PC-9 (cell line): ENCODE measurements at regions of chr1 and their contacts with region 1.

Region 1: DNA sequence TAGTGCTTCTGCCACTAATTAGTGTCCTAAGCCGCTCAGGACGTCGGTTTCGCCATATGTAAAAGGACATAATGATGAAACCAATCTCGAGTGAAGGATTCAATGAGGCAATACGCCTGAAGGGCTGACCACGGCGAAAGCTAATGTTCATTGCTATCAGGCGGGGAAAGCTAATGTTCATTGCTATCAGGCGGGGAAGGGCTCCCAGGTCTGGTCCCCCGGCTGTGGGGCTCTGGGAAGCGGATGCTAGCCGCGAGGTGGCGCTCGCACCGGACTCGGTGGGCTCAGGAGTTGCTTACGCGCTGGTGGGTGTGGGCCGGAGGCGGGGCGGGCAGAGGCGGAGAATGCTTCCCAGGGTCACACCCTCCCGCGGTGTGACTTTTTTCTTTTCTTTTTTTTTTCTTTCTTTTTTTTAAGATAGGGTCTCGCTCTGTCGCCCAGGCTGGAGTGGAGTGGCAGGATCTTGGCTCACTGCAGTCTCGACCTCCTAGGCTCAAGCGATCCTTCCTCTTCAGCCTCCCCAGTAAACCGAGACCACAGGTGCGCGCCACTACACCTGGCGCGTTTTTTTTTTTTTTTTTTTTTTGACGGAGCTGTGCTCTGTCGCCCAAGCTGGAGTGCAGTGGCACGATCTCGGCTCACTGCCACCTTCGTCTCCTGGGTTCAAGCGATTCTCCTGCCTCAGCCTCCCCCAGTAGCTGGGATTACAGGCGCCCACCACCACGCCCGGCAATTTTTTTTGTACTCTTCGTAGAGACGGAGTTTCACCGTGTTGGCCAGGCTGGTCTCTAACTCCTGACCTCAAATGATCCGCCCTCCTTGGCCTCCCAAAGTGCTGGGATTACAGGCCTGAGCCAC is 1.1 kb upstream of the PEAR1 start:
- DNase-seq: peak; percentile 75 to 91
- H3K4me3 ChIP-seq: peak overlapping the region; percentile 24; the same call in 1 of the 2 replicates
- H3K27ac ChIP-seq: no peak overlapping the region
- H3K4me1 ChIP-seq: peaks cover 23% of the 10 kb centered on the region
- H3K27me3 ChIP-seq: peaks cover 8% of the 10 kb centered on the region
- CTCF ChIP-seq: peak; percentile 87

Region 2: DNA sequence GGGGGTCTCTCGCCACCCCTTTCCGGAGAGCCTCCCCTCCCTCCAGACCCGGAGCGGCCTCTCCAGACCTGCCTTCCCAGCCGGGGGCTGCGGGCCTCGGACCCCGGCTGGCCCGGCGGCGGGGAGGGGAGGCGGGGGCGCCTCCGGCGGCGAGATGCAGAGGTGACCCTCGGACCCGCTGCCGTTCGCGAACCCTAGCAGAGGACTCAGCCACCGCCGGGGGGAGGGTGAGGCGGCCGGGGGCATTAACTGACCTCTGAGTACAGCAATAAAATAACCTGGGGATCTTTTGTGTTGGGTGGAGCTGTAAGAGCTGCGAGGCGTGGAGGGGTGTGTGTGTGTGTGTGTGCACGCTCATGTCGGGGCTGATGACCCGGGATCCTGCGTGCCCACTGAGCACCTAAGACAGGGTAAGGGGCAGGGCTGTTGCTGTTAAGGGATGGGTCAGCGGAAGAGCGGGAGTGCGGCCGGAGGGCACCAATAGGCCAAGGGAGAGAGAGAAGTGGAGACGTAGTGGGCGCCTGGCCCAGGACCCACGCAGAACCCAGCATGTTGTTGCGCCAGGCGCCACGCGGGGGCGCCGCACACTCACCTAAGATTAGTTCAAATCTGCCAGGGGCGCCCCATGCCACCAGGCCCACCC is 266.9 kb before region 1 on chr1:
- CTCF ChIA-PET with region 1: interaction called, 4 read pairs
- POLR2A ChIA-PET with region 1: no interaction called
- intact Hi-C with region 1: loop called (anchors 2 kb)
- DNase-seq: peak in 1 of 2 experiments; percentile 32
- H3K4me3 ChIP-seq: no peak overlapping the region
- H3K27ac ChIP-seq: no peak overlapping the region
- H3K4me1 ChIP-seq: peaks cover 26% of the 10 kb centered on the region
- H3K27me3 ChIP-seq: peaks cover 13% of the 10 kb centered on the region; the same call in 1 of the 2 replicates
- CTCF ChIP-seq: peak; percentile 92

Region 3: DNA sequence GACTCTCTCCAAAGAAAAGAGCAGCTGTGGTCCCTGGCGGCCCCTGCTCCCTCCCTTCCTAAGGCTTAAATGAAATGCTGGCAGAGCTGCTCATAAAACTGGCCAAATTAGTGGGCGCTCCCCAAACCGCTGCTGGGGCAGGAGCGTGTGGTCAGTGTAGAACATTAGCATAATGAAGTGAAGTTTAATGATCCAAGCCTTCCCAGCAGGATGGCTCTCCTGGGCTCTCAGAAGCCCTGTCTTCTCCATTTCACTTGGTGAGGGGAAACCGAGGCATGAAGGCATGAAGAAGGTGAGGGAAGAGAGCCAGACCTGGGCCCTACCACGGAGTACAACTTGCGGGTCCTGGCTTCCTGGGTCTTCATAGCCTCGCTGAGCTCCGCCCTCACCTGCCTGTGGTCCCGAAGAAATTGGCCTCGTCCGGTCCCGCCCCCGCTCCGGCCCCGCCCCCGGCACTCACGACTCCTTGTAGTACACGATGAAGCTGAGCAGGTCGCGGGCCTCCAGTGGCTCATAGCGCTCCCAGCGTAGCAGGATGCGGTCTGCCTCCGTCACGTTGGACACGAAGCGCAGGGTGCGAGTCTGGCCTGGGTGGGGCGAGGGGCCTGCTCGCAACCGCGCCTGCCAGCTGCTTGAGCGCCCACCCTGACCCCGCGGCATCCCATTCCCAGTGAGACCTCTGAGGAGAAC is 43.8 kb before region 1 on chr1:
- CTCF ChIA-PET with region 1: no interaction called
- POLR2A ChIA-PET with region 1: no interaction called
- intact Hi-C with region 1: no loop called
- DNase-seq: peak in 1 of 2 experiments; percentile 25
- H3K4me3 ChIP-seq: no peak overlapping the region
- H3K27ac ChIP-seq: no peak overlapping the region
- H3K4me1 ChIP-seq: no peaks in the 10 kb centered on the region
- H3K27me3 ChIP-seq: peaks cover 17% of the 10 kb centered on the region; the same call in 1 of the 2 replicates
- CTCF ChIP-seq: no peak

Region 4: DNA sequence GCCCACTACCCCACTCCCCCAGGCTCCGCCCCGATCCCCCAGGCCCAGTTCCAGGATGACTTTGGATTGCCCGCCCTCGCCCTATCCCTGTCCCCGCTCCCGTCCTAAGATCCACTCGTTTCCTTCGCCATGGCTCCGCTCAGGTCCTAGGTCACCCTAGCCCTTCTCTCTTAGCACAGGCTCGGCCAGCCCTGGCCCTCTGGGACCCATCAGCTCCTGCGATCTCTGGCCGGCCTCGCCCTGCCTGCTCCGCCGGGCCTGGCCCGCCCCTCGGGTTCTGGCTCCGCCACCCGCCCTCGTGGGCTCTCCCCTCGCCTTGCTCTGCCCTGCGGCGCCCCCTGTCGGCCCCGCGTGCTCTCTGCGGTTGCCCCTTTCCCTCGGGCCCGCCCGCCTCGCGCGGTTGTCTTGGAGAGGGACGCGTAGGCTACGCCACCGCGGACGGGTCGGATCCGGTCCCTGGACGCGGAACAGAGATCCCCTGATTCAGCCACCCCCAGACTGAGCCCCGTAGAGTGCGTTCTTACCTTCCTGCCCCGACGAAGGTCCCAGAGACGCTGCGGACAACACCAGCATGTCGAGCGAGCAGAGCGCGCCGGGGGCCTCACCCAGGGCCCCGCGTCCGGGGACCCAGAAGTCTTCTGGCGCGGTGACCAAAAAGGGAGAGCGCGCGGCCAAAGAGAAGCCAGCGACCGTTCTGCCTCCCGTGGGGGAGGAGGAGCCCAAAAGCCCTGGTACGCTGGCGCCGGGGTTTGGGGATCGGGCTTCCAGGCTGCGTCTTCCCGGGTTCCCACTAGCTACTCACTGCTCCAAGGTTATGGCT is 28.0 kb after region 1 on chr1 and contains the start of gene LRRC71:
- CTCF ChIA-PET with region 1: interaction called, 8 read pairs
- POLR2A ChIA-PET with region 1: no interaction called
- intact Hi-C with region 1: loop called (anchors 1 kb)
- DNase-seq: peak in 1 of 2 experiments; percentile 69
- H3K4me3 ChIP-seq: no peak within 1 kb of the TSS
- H3K27ac ChIP-seq: no peak within 1 kb of the TSS
- H3K4me1 ChIP-seq: peaks cover 21% of the 10 kb centered on the region; the same call in 1 of the 2 replicates
- H3K27me3 ChIP-seq: 0 out of 2 replicates have a peak, but pooled peaks cover 4% of the 10 kb centered on the region
- CTCF ChIP-seq: peak; percentile 39
- total RNA-seq, gene LRRC71: not detected in 2 replicates

Region 5: GRCh38 chr1:156961709-156962108 is 69.3 kb after region 1 on chr1:
- CTCF ChIA-PET with region 1: no interaction called
- POLR2A ChIA-PET with region 1: no interaction called
- intact Hi-C with region 1: loop called (anchors 1 kb)
- DNase-seq: peak in 1 of 2 experiments; percentile 37
- H3K4me3 ChIP-seq: no peak overlapping the region
- H3K27ac ChIP-seq: no peak overlapping the region
- H3K4me1 ChIP-seq: peaks cover 41% of the 10 kb centered on the region
- H3K27me3 ChIP-seq: no peaks in the 10 kb centered on the region
- CTCF ChIP-seq: peak; percentile 53

Region 6: DNA sequence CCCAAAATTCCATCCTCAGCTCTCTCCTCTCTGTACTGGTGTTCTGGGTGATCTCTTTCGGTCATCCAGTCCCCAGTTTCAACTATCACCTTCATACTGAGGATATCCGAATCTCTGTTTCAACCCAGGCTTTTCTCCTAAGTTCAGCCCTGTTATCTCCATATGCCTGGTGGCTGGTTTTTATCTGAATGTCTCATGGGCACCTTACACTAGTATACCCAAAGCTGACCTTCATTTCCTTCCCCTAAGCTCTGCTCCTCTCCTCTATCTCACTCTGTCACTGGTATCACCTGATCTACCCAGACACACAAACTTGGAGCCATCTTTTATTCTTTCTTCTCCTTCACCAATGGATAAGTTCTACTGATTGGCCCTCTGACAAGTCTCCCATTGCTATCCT is 81.0 kb after region 1 on chr1:
- CTCF ChIA-PET with region 1: no interaction called
- POLR2A ChIA-PET with region 1: no interaction called
- intact Hi-C with region 1: no loop called
- DNase-seq: no peak
- H3K4me3 ChIP-seq: no peak overlapping the region
- H3K27ac ChIP-seq: no peak overlapping the region
- H3K4me1 ChIP-seq: no peaks in the 10 kb centered on the region
- H3K27me3 ChIP-seq: no peaks in the 10 kb centered on the region
- CTCF ChIP-seq: no peak

Region 7: DNA sequence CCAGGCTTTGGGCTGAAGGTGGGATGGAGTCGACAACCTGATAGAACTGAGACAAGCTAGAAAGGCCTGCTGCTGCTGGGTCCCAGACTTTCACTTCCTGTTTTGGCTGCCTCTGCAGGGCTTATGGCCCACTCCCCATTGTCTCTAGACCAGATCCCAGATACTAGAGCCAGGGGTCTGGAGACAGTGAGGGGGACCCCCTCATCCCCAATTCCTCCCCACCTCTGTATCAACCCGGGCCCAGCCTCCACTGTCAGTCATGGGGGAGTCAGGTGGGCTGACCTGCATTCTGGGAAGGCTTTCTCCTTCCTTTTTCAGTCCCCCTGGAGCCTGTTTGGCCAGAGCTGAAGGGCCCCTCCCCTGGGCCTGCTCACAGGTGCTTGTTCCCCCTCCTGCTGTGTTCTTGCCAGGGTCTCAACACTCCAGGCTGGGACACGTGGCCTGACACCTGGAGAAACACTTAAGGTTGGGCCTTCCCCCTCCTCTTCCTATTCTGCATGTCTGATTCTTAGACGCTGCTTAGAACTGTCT is 225.2 kb after region 1 on chr1:
- CTCF ChIA-PET with region 1: no interaction called
- POLR2A ChIA-PET with region 1: no interaction called
- intact Hi-C with region 1: no loop called
- DNase-seq: no peak
- H3K4me3 ChIP-seq: no peak overlapping the region
- H3K27ac ChIP-seq: no peak overlapping the region
- H3K4me1 ChIP-seq: no peaks in the 10 kb centered on the region
- H3K27me3 ChIP-seq: no peaks in the 10 kb centered on the region
- CTCF ChIP-seq: no peak

Region 8: GRCh38 chr1:157156058-157156541 is 263.7 kb after region 1 on chr1:
- CTCF ChIA-PET with region 1: no interaction called
- POLR2A ChIA-PET with region 1: no interaction called
- intact Hi-C with region 1: loop called (anchors 5 kb)
- DNase-seq: peak in 1 of 2 experiments; percentile 76
- H3K4me3 ChIP-seq: peak overlapping the region; percentile 38; the same call in 1 of the 2 replicates
- H3K27ac ChIP-seq: no peak overlapping the region
- H3K4me1 ChIP-seq: peaks cover 33% of the 10 kb centered on the region
- H3K27me3 ChIP-seq: 0 out of 2 replicates have a peak, but pooled peaks cover 5% of the 10 kb centered on the region
- CTCF ChIP-seq: peak; percentile 98